IMR-90 (cell line): ENCODE measurements at regions of chr1 and their contacts with region 1.

Region 1: GRCh38 chr1:243325305-243325890 is 69.6 kb downstream of the SDCCAG8 start:
- DNase-seq: peak; percentile 82
- ATAC-seq: peak; percentile 88
- H3K4me3 ChIP-seq: no peak overlapping the region
- H3K27ac ChIP-seq: no peak overlapping the region
- H3K4me1 ChIP-seq: peaks cover 4% of the 10 kb centered on the region; the same call in 1 of the 2 replicates
- H3K27me3 ChIP-seq: no peaks in the 10 kb centered on the region
- CTCF ChIP-seq: peak; percentile 90
- POLR2A ChIP-seq: no peak
- RAD21 ChIP-seq: peak; percentile 95

Region 2: DNA sequence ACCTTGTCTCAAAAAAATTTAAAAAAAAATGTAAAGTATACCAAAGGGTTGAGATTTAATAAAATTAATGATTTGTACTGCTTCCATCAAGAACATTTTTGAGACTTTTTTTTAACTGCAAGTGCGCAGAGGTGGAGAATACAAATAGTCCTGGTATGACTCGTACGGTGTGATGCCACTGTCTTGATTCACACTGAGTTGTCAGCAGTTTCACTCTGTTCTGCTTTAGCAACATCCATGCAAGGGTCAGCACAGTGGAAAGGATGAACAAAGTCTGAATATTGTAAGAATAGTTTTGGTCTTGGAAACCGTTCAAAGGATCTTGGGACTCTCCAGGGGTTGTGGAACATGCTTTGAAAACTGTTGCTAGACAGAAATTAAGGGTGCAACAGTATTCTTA is 1437.2 kb before region 1 on chr1:
- CTCF ChIA-PET with region 1: no interaction called
- POLR2A ChIA-PET with region 1: interaction called, 13 read pairs
- dilution Hi-C with region 1: no loop called
- in situ Hi-C with region 1: loop called (anchors 10 kb)
- intact Hi-C with region 1: no loop called
- DNase-seq: peak; percentile 88
- ATAC-seq: peak; percentile 99
- H3K4me3 ChIP-seq: no peak overlapping the region
- H3K27ac ChIP-seq: no peak overlapping the region
- H3K4me1 ChIP-seq: no peaks in the 10 kb centered on the region
- H3K27me3 ChIP-seq: no peaks in the 10 kb centered on the region
- CTCF ChIP-seq: no peak
- POLR2A ChIP-seq: no peak
- RAD21 ChIP-seq: no peak

Region 3: GRCh38 chr1:241895013-241895412 is 1430.4 kb before region 1 on chr1:
- CTCF ChIA-PET with region 1: no interaction called
- POLR2A ChIA-PET with region 1: no interaction called
- dilution Hi-C with region 1: no loop called
- in situ Hi-C with region 1: loop called (anchors 10 kb)
- intact Hi-C with region 1: loop called (anchors 2 kb)
- DNase-seq: no peak
- ATAC-seq: no peak
- H3K4me3 ChIP-seq: no peak overlapping the region
- H3K27ac ChIP-seq: no peak overlapping the region
- H3K4me1 ChIP-seq: no peaks in the 10 kb centered on the region
- H3K27me3 ChIP-seq: no peaks in the 10 kb centered on the region
- CTCF ChIP-seq: no peak
- POLR2A ChIP-seq: no peak
- RAD21 ChIP-seq: no peak

Region 4: GRCh38 chr1:242017584-242018233 is 1307.7 kb before region 1 on chr1:
- CTCF ChIA-PET with region 1: no interaction called
- POLR2A ChIA-PET with region 1: no interaction called
- dilution Hi-C with region 1: no loop called
- in situ Hi-C with region 1: loop called (anchors 10 kb)
- intact Hi-C with region 1: loop called (anchors 1 kb)
- DNase-seq: peak; percentile 21
- ATAC-seq: peak; percentile 59; the same call in 1 of the 2 replicates
- H3K4me3 ChIP-seq: no peak overlapping the region
- H3K27ac ChIP-seq: no peak overlapping the region
- H3K4me1 ChIP-seq: no peaks in the 10 kb centered on the region
- H3K27me3 ChIP-seq: no peaks in the 10 kb centered on the region
- CTCF ChIP-seq: peak; percentile 38; the same call in 1 of the 2 replicates
- POLR2A ChIP-seq: no peak
- RAD21 ChIP-seq: peak; percentile 32

Region 5: GRCh38 chr1:242454262-242455045 is 870.9 kb before region 1 on chr1:
- CTCF ChIA-PET with region 1: no interaction called
- POLR2A ChIA-PET with region 1: no interaction called
- dilution Hi-C with region 1: no loop called
- in situ Hi-C with region 1: loop called (anchors 25 kb)
- intact Hi-C with region 1: loop called (anchors 1 kb)
- DNase-seq: peak; percentile 7
- ATAC-seq: peak; percentile 68; the same call in 1 of the 2 replicates
- H3K4me3 ChIP-seq: 0 out of 2 replicates have a peak overlapping the region, but pooled peaks have one; percentile 19
- H3K27ac ChIP-seq: no peak overlapping the region
- H3K4me1 ChIP-seq: no peaks in the 10 kb centered on the region
- H3K27me3 ChIP-seq: no peaks in the 10 kb centered on the region
- CTCF ChIP-seq: peak; percentile 57
- POLR2A ChIP-seq: no peak
- RAD21 ChIP-seq: peak; percentile 56

Region 6: DNA sequence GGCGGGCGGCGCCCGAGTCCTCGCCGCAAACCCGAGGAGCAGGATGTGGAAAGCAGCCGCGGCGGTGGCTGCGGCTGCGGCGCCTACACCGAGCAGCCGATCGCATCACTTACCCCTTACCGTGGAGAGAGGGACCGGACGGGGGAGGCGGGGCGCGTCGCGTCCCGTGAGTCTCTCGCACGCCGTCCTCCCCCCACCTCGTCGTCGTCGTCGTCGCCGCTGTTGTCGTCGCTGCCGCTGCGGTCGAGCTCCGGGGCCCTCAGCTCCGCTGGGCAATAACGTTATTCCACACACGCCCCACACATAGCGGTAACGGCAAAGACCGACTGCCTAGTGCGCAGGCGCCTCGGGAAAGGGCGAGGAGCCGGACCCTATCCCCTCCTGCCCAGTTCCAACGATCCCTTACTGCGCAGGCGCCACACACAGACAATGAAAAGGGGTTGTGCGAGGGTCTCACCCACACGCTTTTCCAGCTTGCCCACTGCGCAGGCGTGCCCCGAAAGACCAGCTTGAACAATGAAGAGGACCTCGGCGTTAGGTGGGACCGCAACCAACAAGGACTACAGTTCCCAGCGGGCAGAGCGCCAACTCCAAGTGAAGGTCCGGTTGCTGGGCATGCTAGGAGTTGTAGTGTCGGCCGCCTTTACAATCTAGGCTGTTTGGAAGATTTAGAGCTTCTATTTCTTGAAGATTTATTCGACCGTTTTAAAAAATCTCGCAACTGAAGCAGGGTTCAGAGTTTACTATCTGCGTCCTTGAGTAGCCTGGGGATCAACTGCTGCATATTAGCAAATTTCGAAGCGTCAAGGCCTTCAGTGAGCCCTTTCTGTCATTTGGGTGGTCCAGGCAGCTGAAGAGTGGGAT is 70.2 kb before region 1 on chr1 and contains the start of gene CEP170:
- CTCF ChIA-PET with region 1: no interaction called
- POLR2A ChIA-PET with region 1: no interaction called
- dilution Hi-C with region 1: no loop called
- in situ Hi-C with region 1: no loop called
- intact Hi-C with region 1: loop called (anchors 5 kb)
- DNase-seq: peak; percentile 97
- ATAC-seq: peak; percentile 75
- H3K4me3 ChIP-seq: peak within 1 kb of the TSS; percentile 86
- H3K27ac ChIP-seq: peak within 1 kb of the TSS; percentile 89
- H3K4me1 ChIP-seq: no peaks in the 10 kb centered on the region; the same call in 1 of the 2 replicates
- H3K27me3 ChIP-seq: no peaks in the 10 kb centered on the region
- CTCF ChIP-seq: no peak
- POLR2A ChIP-seq: no peak
- RAD21 ChIP-seq: no peak
- total RNA-seq, gene CEP170: 151 and 196 TPM in 2 replicates

Region 7: DNA sequence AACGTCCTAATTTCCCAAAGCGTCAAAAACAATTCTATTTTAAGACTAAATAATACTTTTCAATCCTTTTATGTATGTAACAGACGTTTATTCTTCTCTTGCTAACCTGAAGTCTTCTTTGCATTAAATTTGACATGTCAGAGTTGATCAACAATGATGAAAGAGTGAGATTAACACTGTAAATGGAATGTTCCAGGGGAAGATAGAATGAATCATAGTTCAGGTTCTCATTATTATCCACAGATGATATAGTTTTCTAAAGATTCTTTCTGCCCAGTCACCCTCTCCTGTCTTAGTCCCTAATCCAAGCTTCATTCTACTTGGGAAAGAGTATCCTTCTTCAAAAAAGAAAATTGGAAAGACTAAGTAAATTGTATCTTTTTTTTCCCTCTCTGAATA is 30.7 kb before region 1 on chr1:
- CTCF ChIA-PET with region 1: no interaction called
- POLR2A ChIA-PET with region 1: no interaction called
- dilution Hi-C with region 1: no loop called
- in situ Hi-C with region 1: no loop called
- intact Hi-C with region 1: no loop called
- DNase-seq: peak; percentile 68
- ATAC-seq: peak; percentile 51; the same call in 1 of the 2 replicates
- H3K4me3 ChIP-seq: no peak overlapping the region
- H3K27ac ChIP-seq: no peak overlapping the region
- H3K4me1 ChIP-seq: peaks cover 5% of the 10 kb centered on the region; the same call in 1 of the 2 replicates
- H3K27me3 ChIP-seq: no peaks in the 10 kb centered on the region
- CTCF ChIP-seq: no peak
- POLR2A ChIP-seq: no peak
- RAD21 ChIP-seq: no peak

Region 8: GRCh38 chr1:244239261-244239770 is 913.9 kb after region 1 on chr1:
- CTCF ChIA-PET with region 1: no interaction called
- POLR2A ChIA-PET with region 1: no interaction called
- dilution Hi-C with region 1: no loop called
- in situ Hi-C with region 1: no loop called
- intact Hi-C with region 1: no loop called
- DNase-seq: peak; percentile 45
- ATAC-seq: peak; percentile 88
- H3K4me3 ChIP-seq: no peak overlapping the region
- H3K27ac ChIP-seq: peak overlapping the region; percentile 79
- H3K4me1 ChIP-seq: peaks cover 8% of the 10 kb centered on the region
- H3K27me3 ChIP-seq: no peaks in the 10 kb centered on the region; the same call in 1 of the 2 replicates
- CTCF ChIP-seq: no peak
- POLR2A ChIP-seq: no peak
- RAD21 ChIP-seq: no peak